CD4-positive, alpha-beta memory T cell (primary cell): ENCODE measurements at regions of chr7 and their contacts with region 1.

Region 1: GRCh38 chr7:6323967-6324701 is 51.7 kb upstream of the CYTH3 start:
- DNase-seq: no peak
- H3K4me3 ChIP-seq: no peak overlapping the region
- H3K4me3 Mint-ChIP-seq: no peak overlapping the region
- H3K27ac ChIP-seq: no peak overlapping the region
- H3K27ac Mint-ChIP-seq: no peak overlapping the region
- H3K4me1 ChIP-seq: no peaks in the 10 kb centered on the region
- H3K4me1 Mint-ChIP-seq: peaks cover 4 to 5% (median 4%) of the 10 kb centered on the region in 4 donors
- H3K27me3 ChIP-seq: no peaks in the 10 kb centered on the region
- H3K27me3 Mint-ChIP-seq: peaks cover 3% of the 10 kb centered on the region in 2 donors

Region 2: GRCh38 chr7:5997222-5997808 is 326.8 kb before region 1 on chr7:
- CTCF ChIA-PET with region 1: interaction called, 74 read pairs
- POLR2A ChIA-PET with region 1: no interaction called
- intact Hi-C with region 1: no loop called
- DNase-seq: peak in 4 of 5 donors; percentile 57 to 61 (median 58)
- H3K4me3 ChIP-seq: no peak overlapping the region
- H3K4me3 Mint-ChIP-seq: no peak overlapping the region
- H3K27ac ChIP-seq: no peak overlapping the region
- H3K27ac Mint-ChIP-seq: peak overlapping the region in 1 of 7 donors; percentile 48
- H3K4me1 ChIP-seq: no peaks in the 10 kb centered on the region
- H3K4me1 Mint-ChIP-seq: peaks cover 0 to 1% (median 0%) of the 10 kb centered on the region in 4 donors
- H3K27me3 ChIP-seq: no peaks in the 10 kb centered on the region
- H3K27me3 Mint-ChIP-seq: no peaks in the 10 kb centered on the region

Region 3: GRCh38 chr7:6026011-6026819 is 297.9 kb before region 1 on chr7:
- CTCF ChIA-PET with region 1: interaction called, 12 read pairs
- POLR2A ChIA-PET with region 1: no interaction called
- intact Hi-C with region 1: no loop called
- DNase-seq: peak; percentile 66 to 74 (median 70)
- H3K4me3 ChIP-seq: peak overlapping the region in 1 of 2 donors; percentile 57
- H3K4me3 Mint-ChIP-seq: peak overlapping the region; percentile 73 to 89 (median 86)
- H3K27ac ChIP-seq: peak overlapping the region; percentile 61
- H3K27ac Mint-ChIP-seq: peak overlapping the region; percentile 72 to 96 (median 95)
- H3K4me1 ChIP-seq: peaks cover 25% of the 10 kb centered on the region
- H3K4me1 Mint-ChIP-seq: peaks cover 10 to 30% (median 16%) of the 10 kb centered on the region in 4 donors
- H3K27me3 ChIP-seq: no peaks in the 10 kb centered on the region
- H3K27me3 Mint-ChIP-seq: no peaks in the 10 kb centered on the region

Region 4: DNA sequence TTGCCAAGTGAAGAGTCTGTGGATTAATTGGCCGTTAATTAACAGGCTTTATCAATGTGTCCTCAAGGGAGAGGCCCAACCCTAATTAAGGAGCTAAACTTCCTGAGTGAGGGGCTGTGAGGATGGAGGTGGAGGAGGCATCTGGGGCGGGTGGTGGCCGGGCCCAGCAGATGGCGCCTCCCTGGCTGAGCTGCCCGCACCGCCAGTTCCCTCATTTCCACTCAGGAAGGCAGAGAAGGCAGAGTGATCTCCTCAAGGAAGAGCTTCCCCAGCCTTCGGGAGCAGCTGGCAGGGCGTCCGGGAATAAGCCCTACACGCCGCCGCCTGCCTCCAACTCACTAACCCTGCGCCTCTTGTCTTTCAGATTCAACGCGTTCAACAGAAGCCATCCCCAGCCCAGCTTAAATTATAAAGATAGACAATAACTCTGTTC is 163.9 kb before region 1 on chr7:
- CTCF ChIA-PET with region 1: interaction called, 12 read pairs
- POLR2A ChIA-PET with region 1: no interaction called
- intact Hi-C with region 1: loop called (anchors 5 kb)
- DNase-seq: peak in 1 of 5 donors; percentile 10
- H3K4me3 ChIP-seq: no peak overlapping the region
- H3K4me3 Mint-ChIP-seq: no peak overlapping the region
- H3K27ac ChIP-seq: no peak overlapping the region
- H3K27ac Mint-ChIP-seq: peak overlapping the region in 1 of 7 donors; percentile 18
- H3K4me1 ChIP-seq: no peaks in the 10 kb centered on the region
- H3K4me1 Mint-ChIP-seq: peaks cover 3 to 12% (median 6%) of the 10 kb centered on the region in 4 donors
- H3K27me3 ChIP-seq: no peaks in the 10 kb centered on the region
- H3K27me3 Mint-ChIP-seq: no peaks in the 10 kb centered on the region

Region 5: DNA sequence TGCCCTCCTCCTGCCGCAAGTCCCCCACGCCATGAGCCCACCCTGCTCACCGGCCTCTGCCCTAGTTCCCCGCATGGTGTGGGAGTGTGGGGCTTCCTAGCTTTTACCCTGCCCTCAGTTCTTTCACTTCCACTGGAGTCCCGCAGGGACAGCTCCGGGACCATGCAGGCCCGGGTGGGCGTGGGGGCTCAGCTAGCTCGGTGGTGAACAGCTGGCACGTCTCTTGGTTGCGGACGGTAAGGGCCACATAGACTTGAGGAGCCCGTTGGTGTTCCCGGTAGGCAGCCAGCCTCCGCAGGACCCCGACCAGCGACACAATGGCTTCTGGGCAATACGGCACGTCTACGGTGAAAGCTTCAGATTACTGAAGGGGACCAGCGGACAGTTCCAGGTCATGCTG is 610.9 kb after region 1 on chr7:
- CTCF ChIA-PET with region 1: no interaction called
- POLR2A ChIA-PET with region 1: no interaction called
- intact Hi-C with region 1: loop called (anchors 10 kb)
- DNase-seq: no peak
- H3K4me3 ChIP-seq: no peak overlapping the region
- H3K4me3 Mint-ChIP-seq: no peak overlapping the region
- H3K27ac ChIP-seq: no peak overlapping the region
- H3K27ac Mint-ChIP-seq: peak overlapping the region in 1 of 7 donors; percentile 31
- H3K4me1 ChIP-seq: no peaks in the 10 kb centered on the region
- H3K4me1 Mint-ChIP-seq: peaks cover 5 to 12% (median 8%) of the 10 kb centered on the region in 4 donors
- H3K27me3 ChIP-seq: no peaks in the 10 kb centered on the region
- H3K27me3 Mint-ChIP-seq: no peaks in the 10 kb centered on the region

Region 6: DNA sequence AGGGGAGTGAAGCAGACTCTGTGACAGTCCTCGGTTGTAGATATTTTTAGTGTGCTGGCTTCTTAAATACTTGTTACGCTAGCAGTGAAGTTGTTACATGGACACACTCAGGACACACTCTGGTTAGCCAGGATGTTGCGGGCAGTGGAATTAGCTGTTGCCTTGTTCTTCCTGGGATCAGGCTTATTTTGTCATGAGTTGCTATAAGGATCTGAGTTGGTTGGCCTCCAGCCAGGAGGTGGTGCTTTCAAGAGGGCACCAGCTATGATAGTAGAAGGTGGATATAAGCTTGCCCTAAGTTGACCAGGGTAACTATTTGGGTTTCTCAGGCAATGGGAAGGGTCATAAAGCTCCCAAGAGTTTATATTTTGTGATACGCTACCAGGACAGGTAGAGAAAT is 708.1 kb after region 1 on chr7:
- CTCF ChIA-PET with region 1: no interaction called
- POLR2A ChIA-PET with region 1: no interaction called
- intact Hi-C with region 1: no loop called
- DNase-seq: no peak
- H3K4me3 ChIP-seq: no peak overlapping the region
- H3K4me3 Mint-ChIP-seq: no peak overlapping the region
- H3K27ac ChIP-seq: no peak overlapping the region
- H3K27ac Mint-ChIP-seq: no peak overlapping the region
- H3K4me1 ChIP-seq: no peaks in the 10 kb centered on the region
- H3K4me1 Mint-ChIP-seq: no peaks in the 10 kb centered on the region
- H3K27me3 ChIP-seq: no peaks in the 10 kb centered on the region
- H3K27me3 Mint-ChIP-seq: peaks cover 18 to 23% of the 10 kb centered on the region in 2 donors